B cell (primary cell): ENCODE measurements at regions of chr4 and their contacts with region 1.

Region 1: DNA sequence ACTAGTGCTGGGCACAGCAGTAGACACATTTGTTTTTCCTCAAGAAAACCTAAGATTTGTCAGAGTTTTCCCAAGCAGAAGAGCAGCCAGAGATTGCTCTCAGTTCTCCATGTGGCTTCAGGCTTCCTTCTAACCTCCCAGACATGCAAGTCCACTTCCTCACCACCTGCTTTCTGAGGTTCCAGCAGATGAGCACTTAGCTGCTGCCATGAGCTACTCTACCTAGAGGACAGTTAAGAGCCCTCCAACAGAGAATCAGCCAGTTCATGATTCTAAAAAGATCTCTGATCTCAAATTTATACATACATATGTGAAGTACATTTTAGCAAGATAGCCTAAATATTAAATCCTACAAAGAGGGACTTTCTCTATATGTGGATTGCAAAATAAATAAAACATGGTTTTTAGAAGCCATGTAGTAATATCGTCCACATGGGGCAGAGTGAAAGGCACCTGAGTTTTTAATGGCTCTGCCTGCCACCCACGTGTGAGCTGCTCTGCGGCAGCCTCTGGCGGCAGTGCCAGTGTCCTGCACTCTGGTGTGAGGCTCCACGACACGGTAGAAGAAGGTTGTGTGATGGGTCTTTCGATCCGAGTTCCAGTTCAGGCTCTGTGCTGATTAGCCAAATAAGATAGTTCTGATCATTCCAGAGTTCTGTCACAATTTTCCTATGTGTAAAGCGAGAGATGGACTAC is 10.3 kb downstream of the CYP4V2 start:
- DNase-seq: peak; percentile 69
- ATAC-seq: peak; percentile 93
- H3K4me3 ChIP-seq: no peak overlapping the region
- H3K4me3 Mint-ChIP-seq: no peak overlapping the region
- H3K27ac ChIP-seq: no peak overlapping the region
- H3K27ac Mint-ChIP-seq: no peak overlapping the region
- H3K4me1 ChIP-seq: peaks cover 0 to 4% of the 10 kb centered on the region in 2 donors
- H3K4me1 Mint-ChIP-seq: peaks cover 20% of the 10 kb centered on the region
- H3K27me3 ChIP-seq: no peaks in the 10 kb centered on the region
- H3K27me3 Mint-ChIP-seq: no peaks in the 10 kb centered on the region
- CTCF ChIP-seq: peak; percentile 83

Region 2: GRCh38 chr4:186191200-186192065 is 10.2 kb before region 1 on chr4 and contains the start of gene CYP4V2:
- CTCF ChIA-PET with region 1: interaction called, 11 read pairs
- POLR2A ChIA-PET with region 1: interaction called, 3 read pairs
- intact Hi-C with region 1: loop called (anchors 1 kb)
- DNase-seq: peak; percentile 91
- ATAC-seq: peak; percentile 84
- H3K4me3 ChIP-seq: peak within 1 kb of the TSS; percentile 66 to 95 (median 90)
- H3K4me3 Mint-ChIP-seq: peak within 1 kb of the TSS; percentile 94
- H3K27ac ChIP-seq: peak within 1 kb of the TSS; percentile 89 to 91
- H3K27ac Mint-ChIP-seq: peak within 1 kb of the TSS; percentile 96
- H3K4me1 ChIP-seq: peaks cover 17 to 21% of the 10 kb centered on the region in 2 donors
- H3K4me1 Mint-ChIP-seq: peaks cover 27% of the 10 kb centered on the region
- H3K27me3 ChIP-seq: no peaks in the 10 kb centered on the region
- H3K27me3 Mint-ChIP-seq: no peaks in the 10 kb centered on the region
- CTCF ChIP-seq: peak; percentile 51
- total RNA-seq, gene CYP4V2: 18.3 and 19.7 TPM in 2 replicates